K562 (cell line): ENCODE measurements at regions of chr3 and their contacts with region 1.

Region 1: DNA sequence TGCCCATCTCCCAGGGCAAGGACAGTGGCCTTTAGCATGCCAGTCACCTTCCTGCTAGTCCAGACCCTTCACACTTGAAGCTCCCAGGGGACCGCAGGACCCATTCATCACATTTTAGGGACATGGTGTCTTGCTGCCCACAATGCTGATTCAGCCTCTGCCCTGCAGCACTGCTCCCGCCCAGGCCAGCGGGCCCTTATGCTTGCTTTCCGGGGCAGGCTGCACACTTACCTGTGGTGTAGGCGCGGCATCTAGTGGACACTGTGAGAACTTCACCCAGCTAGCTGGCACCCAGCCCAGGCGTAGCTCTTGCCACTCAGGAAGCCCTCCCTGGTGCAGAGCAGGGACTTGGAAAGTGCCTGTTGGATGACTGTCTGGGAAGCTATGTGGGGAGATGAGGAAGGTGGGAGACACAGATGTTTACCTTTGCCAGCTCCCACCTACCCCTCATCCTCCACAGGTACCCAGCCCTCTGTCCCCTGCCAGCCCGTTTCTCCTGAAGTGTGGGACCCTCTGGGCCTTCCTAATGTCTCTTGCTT is 26.2 kb upstream of the NR2C2 start:
- DNase-seq: peak; percentile 83 to 91 (median 88)
- ATAC-seq: peak; percentile 87
- H3K4me3 ChIP-seq: no peak overlapping the region
- H3K27ac ChIP-seq: no peak overlapping the region
- H3K4me1 ChIP-seq: peaks cover 0 to 3% of the 10 kb centered on the region in 2 experiments; a peak in 2 of 5 replicates
- H3K27me3 ChIP-seq: peaks cover 47 to 62% of the 10 kb centered on the region in 2 experiments
- CTCF ChIP-seq: peak; percentile 95 to 98 (median 98)
- EP300 ChIP-seq: no peak
- POLR2A ChIP-seq: no peak
- RAD21 ChIP-seq: peak; percentile 97 to 98

Region 2: DNA sequence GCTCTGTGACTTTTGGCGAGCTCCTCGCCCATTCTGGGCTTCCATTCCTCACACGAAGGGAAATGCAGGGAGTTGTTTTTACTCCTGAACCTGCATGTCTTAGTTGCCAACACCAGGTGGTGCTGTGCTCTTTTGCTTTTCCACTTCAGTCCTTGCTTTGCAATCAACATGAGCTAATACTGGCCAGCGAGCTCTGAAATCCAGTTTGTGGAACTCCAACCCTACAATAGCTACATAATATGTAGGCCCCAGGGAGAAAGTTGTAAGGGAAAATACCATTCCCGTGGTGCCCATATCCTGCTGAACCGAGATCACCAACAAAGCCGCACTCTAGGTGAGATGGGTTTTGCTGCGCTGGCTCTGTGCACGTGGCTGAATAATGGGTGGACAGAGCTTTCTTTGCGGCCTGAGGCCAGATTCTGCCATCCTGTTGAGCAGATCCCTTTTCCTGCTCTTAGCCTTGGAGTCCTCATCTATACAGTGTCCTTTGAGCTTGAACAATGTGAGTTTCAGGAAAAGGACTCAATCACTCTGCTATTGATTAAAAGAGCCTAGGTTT is 717.5 kb before region 1 on chr3:
- CTCF ChIA-PET with region 1: interaction called, 3 read pairs
- POLR2A ChIA-PET with region 1: no interaction called
- in situ Hi-C with region 1: no loop called
- intact Hi-C with region 1: loop called (anchors 5 kb)
- DNase-seq: peak; percentile 76 to 93 (median 82)
- ATAC-seq: peak; percentile 85
- H3K4me3 ChIP-seq: no peak overlapping the region
- H3K27ac ChIP-seq: peak overlapping the region; percentile 86
- H3K4me1 ChIP-seq: peaks cover 32 to 48% of the 10 kb centered on the region in 2 experiments; a peak in 4 of 5 replicates
- H3K27me3 ChIP-seq: no peaks in the 10 kb centered on the region
- CTCF ChIP-seq: peak; percentile 89 to 98 (median 97)
- EP300 ChIP-seq: peak; percentile 40; the same call in 1 of the 2 replicates
- POLR2A ChIP-seq: no peak
- RAD21 ChIP-seq: peak; percentile 99

Region 3: DNA sequence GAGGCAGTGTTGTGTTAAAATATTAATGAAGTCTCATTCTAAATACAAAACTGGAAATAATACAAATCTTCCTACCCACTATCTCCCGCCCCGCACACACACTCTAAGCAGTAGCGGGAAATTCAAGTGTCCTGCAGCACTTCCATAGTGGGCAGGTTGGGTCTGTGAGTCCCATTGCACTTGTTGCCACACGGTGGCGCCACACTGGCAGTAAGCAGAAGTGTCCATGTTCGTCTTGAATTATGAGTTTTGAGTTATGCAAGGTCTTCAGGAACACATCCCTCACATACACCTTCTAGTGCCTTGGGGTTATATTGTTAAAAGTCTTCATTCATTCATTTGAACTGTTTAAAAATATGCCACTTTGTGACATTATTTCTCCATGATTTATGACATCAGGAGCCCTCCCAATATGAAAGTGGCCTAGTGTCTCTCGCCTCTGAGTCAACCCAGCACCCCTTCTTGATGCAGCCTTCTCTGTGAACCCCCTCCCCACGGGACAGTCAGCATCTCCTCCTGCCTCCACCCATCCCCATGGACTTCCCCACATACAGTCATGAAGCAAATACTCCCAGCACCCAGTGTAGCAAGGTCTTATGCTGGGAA is 287.2 kb before region 1 on chr3:
- CTCF ChIA-PET with region 1: interaction called, 9 read pairs
- POLR2A ChIA-PET with region 1: no interaction called
- in situ Hi-C with region 1: no loop called
- intact Hi-C with region 1: loop called (anchors 2 kb)
- DNase-seq: peak; percentile 74 to 83 (median 81)
- ATAC-seq: peak; percentile 99
- H3K4me3 ChIP-seq: no peak overlapping the region
- H3K27ac ChIP-seq: no peak overlapping the region
- H3K4me1 ChIP-seq: no peaks in the 10 kb centered on the region
- H3K27me3 ChIP-seq: peaks cover 20 to 54% of the 10 kb centered on the region in 2 experiments; a peak in 4 of 5 replicates
- CTCF ChIP-seq: peak; percentile 90 to 96 (median 93)
- EP300 ChIP-seq: no peak
- POLR2A ChIP-seq: no peak
- RAD21 ChIP-seq: peak; percentile 67 to 92

Region 4: GRCh38 chr3:14796403-14797077 is 124.6 kb before region 1 on chr3:
- CTCF ChIA-PET with region 1: interaction called, 20 read pairs
- POLR2A ChIA-PET with region 1: interaction called, 4 read pairs
- in situ Hi-C with region 1: loop called (anchors 5 kb)
- intact Hi-C with region 1: loop called (anchors 1 kb)
- DNase-seq: no peak
- ATAC-seq: no peak
- H3K4me3 ChIP-seq: no peak overlapping the region
- H3K27ac ChIP-seq: no peak overlapping the region
- H3K4me1 ChIP-seq: no peaks in the 10 kb centered on the region; a peak in 1 of 5 replicates
- H3K27me3 ChIP-seq: peaks cover 24 to 76% of the 10 kb centered on the region in 2 experiments; a peak in 4 of 5 replicates
- CTCF ChIP-seq: no peak
- EP300 ChIP-seq: no peak
- POLR2A ChIP-seq: no peak
- RAD21 ChIP-seq: no peak

Region 5: GRCh38 chr3:15051531-15051930 is 130.4 kb after region 1 on chr3:
- CTCF ChIA-PET with region 1: interaction called, 3 read pairs
- POLR2A ChIA-PET with region 1: interaction called, 4 read pairs
- in situ Hi-C with region 1: no loop called
- intact Hi-C with region 1: loop called (anchors 5 kb)
- DNase-seq: peak; percentile 69 to 79 (median 72)
- ATAC-seq: peak; percentile 90
- H3K4me3 ChIP-seq: no peak overlapping the region
- H3K27ac ChIP-seq: peak overlapping the region; percentile 7; the same call in 1 of the 3 replicates
- H3K4me1 ChIP-seq: peaks cover 33 to 43% of the 10 kb centered on the region in 2 experiments
- H3K27me3 ChIP-seq: no peaks in the 10 kb centered on the region
- CTCF ChIP-seq: peak; percentile 76 to 90 (median 77)
- EP300 ChIP-seq: no peak
- POLR2A ChIP-seq: peak; percentile 18; the same call in 1 of the 2 replicates
- RAD21 ChIP-seq: peak; percentile 6 to 51; a peak in 2 of 4 replicates

Region 6: DNA sequence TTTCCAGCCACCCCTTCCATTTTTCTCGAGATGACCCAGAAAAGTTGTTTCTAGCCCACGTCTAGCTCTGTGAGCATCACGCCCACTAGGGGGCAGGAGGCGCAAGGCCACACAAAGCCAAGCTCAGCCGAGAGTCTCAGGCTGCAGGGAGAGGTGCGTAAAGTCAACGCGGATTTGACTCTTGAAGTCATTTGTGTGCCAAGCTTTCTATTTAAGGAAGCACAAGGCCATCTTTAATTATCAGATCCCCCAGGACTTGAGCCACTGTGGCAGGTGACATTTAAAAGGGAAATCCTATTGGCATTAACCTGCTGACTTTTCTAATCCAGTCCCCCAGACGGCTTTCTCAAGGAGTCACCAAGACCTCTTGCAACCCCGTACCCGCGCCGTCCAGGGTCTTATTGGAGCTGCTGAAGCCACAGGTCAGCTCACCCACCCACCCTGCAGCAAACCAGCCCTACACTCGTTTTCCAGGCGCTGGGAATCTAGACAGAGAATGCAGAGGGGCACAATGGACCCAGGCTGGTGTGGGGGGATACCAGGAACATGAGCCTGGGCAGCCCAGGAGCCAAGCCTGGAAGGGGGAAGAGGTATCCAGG is 347.0 kb after region 1 on chr3:
- CTCF ChIA-PET with region 1: no interaction called
- POLR2A ChIA-PET with region 1: no interaction called
- in situ Hi-C with region 1: no loop called
- intact Hi-C with region 1: loop called (anchors 5 kb)
- DNase-seq: peak; percentile 82 to 94 (median 84)
- ATAC-seq: peak; percentile 81
- H3K4me3 ChIP-seq: no peak overlapping the region
- H3K27ac ChIP-seq: peak overlapping the region; percentile 82; the same call in 1 of the 3 replicates
- H3K4me1 ChIP-seq: peaks cover 29 to 32% of the 10 kb centered on the region in 2 experiments
- H3K27me3 ChIP-seq: no peaks in the 10 kb centered on the region
- CTCF ChIP-seq: peak; percentile 97 to 99 (median 99)
- EP300 ChIP-seq: no peak; the same call in 1 of the 2 replicates
- POLR2A ChIP-seq: no peak
- RAD21 ChIP-seq: peak; percentile 100